GM13977 (cell line): ENCODE measurements at regions of chr2 and their contacts with region 1.

Region 1: DNA sequence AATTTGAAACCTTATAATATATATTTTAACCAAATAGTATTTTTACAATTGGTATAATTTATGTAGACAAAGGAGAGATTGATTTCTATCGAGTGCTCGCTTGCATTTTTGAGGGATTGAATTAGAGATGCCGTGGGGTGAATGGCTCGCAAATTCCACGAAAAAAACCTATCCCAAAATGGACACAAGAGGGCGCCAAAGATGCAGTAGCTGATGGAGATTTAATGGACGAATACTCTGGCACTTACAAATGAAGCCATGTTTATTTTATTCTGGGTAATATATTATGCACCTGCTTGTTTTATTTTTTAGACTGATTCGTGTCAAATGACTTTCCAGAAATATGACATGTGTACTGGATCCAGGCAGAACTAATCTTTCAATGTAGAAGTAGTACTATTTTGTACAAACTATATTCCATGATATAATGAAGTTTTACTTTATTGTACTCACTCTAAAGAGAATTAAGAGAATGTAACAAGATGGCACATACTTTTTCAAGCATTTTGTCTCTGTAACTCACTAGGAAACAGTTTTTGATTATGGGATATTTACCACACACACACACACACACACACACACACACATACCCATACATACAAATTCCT is 505.4 kb downstream of the PLCL1 start:
- DNase-seq: peak; percentile 36
- CTCF ChIP-seq: peak; percentile 77

Region 2: DNA sequence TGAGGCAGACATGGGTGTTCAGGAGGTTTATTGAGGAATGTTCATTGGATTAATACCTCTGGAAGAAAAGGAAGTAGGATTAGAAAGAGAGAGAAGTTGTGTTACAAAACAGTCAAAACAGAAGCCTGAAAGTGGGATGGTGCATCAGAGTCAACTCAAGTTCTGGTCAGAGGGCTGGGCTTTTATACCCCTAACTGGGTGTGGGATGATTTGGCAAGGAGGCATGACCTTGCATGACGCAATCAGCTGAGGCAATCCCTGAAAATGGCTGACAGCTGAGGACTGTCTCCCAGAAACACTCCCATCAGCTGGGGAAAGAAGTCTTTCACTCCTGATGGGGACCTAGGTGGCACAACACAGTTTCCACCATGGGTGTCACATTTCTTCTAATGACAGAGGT is 329.8 kb after region 1 on chr2:
- in situ Hi-C with region 1: no loop called
- DNase-seq: no peak
- CTCF ChIP-seq: no peak

Region 3: GRCh38 chr2:199488772-199489400 is 1179.1 kb after region 1 on chr2:
- in situ Hi-C with region 1: loop called (anchors 10 kb)
- DNase-seq: peak; percentile 56
- CTCF ChIP-seq: peak; percentile 82

Region 4: GRCh38 chr2:199739413-199740110 is 1429.8 kb after region 1 on chr2:
- in situ Hi-C with region 1: loop called (anchors 25 kb)
- DNase-seq: peak; percentile 43
- CTCF ChIP-seq: peak; percentile 92